Upper lobe of right lung (tissue), 1 donor: ENCODE measurements at regions of chr5 and their contacts with region 1.

Region 1: DNA sequence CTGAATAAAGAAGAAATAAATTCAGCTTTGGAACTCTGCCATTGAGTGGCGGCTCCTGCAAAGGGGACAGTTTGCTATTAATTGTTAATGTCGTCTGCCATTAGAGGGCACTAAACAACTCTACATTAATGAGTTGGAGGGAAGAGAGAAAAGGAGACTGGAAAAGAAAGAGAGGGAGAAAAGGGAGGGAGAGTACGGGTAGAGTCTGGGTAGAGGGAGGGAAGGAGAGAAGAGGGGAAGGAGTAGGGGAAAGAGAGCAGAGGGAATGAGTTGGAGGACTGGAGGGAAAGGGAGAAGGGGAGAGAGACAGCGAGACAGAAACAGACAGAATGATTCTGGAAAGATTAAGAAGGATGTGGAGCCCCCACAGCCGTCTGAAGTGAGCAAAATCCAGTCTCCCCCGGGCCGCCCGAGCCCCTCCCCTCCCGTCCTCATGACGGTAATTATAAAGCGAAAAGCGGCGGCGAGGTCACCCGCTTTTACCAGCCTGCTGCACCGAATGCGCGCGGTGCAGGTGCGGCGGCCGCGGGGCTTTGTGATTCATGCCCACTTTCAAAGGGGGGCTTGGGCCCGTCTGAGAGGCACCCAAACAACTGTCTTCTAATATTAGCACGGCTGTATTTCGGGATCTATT is 1.9 kb upstream of the FST start:
- DNase-seq: no peak
- ATAC-seq: peak; percentile 48
- H3K4me3 ChIP-seq: peak overlapping the region; percentile 71
- H3K27ac ChIP-seq: no peak overlapping the region
- H3K4me1 ChIP-seq: peaks cover 3% of the 10 kb centered on the region
- H3K27me3 ChIP-seq: peaks cover 3% of the 10 kb centered on the region
- CTCF ChIP-seq: peak; percentile 60

Region 2: GRCh38 chr5:53631251-53631650 is 152.7 kb after region 1 on chr5:
- intact Hi-C with region 1: no loop called
- DNase-seq: no peak
- ATAC-seq: no peak
- H3K4me3 ChIP-seq: no peak overlapping the region
- H3K27ac ChIP-seq: no peak overlapping the region
- H3K4me1 ChIP-seq: no peaks in the 10 kb centered on the region
- H3K27me3 ChIP-seq: no peaks in the 10 kb centered on the region
- CTCF ChIP-seq: no peak

Region 3: GRCh38 chr5:54217826-54218503 is 739.4 kb after region 1 on chr5:
- intact Hi-C with region 1: loop called (anchors 10 kb)
- DNase-seq: no peak
- ATAC-seq: peak; percentile 82
- H3K4me3 ChIP-seq: no peak overlapping the region
- H3K27ac ChIP-seq: no peak overlapping the region
- H3K4me1 ChIP-seq: no peaks in the 10 kb centered on the region
- H3K27me3 ChIP-seq: no peaks in the 10 kb centered on the region
- CTCF ChIP-seq: peak; percentile 84